Left cardiac atrium (tissue), 4 donors: ENCODE measurements at regions of chr4 and their contacts with region 1.

Region 1: GRCh38 chr4:173990126-173990868 is 293.2 kb downstream of the FBXO8 start:
- DNase-seq: no peak
- ATAC-seq: peak; percentile 77 to 87

Region 2: GRCh38 chr4:173522123-173522950 is 468.0 kb before region 1 on chr4:
- intact Hi-C with region 1: loop called in 1 of 2 experiments (anchors 5 kb)
- DNase-seq: peak; percentile 95
- ATAC-seq: peak; percentile 78 to 79

Region 3: GRCh38 chr4:173748353-173748752 is 241.9 kb before region 1 on chr4:
- intact Hi-C with region 1: loop called in 1 of 2 experiments (anchors 5 kb)
- DNase-seq: no peak
- ATAC-seq: peak; percentile 38 to 44

Region 4: GRCh38 chr4:173763374-173763773 is 226.9 kb before region 1 on chr4:
- intact Hi-C with region 1: loop called in 1 of 2 experiments (anchors 5 kb)
- DNase-seq: no peak
- ATAC-seq: peak; percentile 39 to 59

Region 5: DNA sequence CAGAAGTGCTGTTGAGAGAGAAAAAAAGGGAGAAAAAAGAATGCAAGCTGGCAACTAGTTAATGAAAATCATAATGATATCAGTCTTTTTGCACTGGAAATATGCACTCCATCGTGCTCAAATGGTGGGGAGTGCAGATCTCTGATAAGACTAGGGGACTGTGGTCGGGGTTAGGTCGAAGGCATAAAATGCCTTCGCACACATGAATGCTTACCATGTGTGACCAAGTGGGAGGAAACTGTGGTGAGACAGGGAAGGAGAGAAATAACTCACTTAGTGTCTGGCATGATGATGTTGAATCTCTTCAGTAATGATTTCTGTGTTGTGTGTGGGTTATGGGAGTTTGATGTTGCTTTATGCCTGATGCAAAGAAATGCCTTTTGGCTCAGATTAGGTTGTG is 65.7 kb before region 1 on chr4:
- intact Hi-C with region 1: no loop called
- DNase-seq: no peak
- ATAC-seq: peak in 1 of 2 donors; percentile 18